CD14-positive monocyte (primary cell): ENCODE measurements at regions of chr19 and their contacts with region 1.

Region 1: DNA sequence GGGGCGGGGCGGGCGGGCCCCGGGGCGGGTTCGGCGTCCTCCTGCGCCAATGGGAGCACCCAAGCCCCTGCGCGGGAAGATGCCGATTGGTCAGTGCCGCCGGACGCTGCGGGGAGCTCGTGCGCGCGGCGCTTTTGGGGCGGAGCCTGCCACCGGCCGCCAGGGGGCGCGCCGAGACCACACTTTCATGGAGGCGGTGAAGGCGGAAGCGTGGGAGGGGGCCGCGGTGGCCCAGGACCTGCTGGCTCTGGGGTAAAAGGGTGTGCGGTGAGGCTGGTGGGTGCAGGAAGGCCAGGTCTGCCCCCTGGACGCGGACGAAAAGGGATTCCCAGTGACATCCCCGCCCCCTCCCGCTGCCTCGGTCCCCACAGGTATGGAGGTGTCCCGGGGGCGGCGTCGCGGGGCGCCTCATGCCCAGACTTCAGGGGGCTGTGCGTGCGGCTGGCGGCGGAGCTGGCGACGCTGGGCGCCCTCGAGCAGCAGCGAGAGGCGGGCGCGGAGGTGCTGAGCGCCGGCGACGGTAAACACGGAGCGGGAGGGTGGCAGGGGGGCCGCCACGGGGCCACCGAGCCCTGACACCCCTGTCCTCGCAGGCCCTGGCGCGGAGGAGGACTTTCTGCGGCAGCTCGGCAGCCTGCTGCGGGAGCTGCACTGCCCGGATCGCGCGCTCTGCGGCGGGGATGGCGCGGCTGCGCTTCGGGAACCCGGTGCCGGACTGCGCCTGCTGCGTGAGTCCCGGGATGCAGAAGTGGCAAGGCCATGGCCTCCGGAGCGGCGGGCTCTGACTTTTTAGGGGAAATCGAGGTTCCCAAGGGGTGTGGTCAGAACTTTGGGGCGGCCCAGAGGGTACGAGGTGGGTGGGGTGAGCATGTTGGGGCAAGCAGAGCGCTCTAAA is at the start of gene FAM98C:
- DNase-seq: peak; percentile 96 to 97 (median 97)
- H3K4me3 ChIP-seq: peak within 1 kb of the TSS; percentile 80 to 88 (median 88)
- H3K4me3 Mint-ChIP-seq: peak within 1 kb of the TSS; percentile 87 to 95
- H3K27ac ChIP-seq: peak within 1 kb of the TSS; percentile 15 to 83
- H3K27ac Mint-ChIP-seq: peak within 1 kb of the TSS; percentile 56 to 91 (median 82)
- H3K4me1 ChIP-seq: peaks cover 12 to 13% of the 10 kb centered on the region in 2 donors
- H3K4me1 Mint-ChIP-seq: peaks cover 16% of the 10 kb centered on the region
- H3K27me3 ChIP-seq: peaks cover 0 to 3% of the 10 kb centered on the region in 2 donors
- H3K27me3 Mint-ChIP-seq: peaks cover 8 to 17% (median 8%) of the 10 kb centered on the region in 3 donors
- CTCF ChIP-seq: peak; percentile 99
- polyA plus RNA-seq, gene FAM98C: 8.5 to 41.0 (median 12.6) TPM

Region 2: DNA sequence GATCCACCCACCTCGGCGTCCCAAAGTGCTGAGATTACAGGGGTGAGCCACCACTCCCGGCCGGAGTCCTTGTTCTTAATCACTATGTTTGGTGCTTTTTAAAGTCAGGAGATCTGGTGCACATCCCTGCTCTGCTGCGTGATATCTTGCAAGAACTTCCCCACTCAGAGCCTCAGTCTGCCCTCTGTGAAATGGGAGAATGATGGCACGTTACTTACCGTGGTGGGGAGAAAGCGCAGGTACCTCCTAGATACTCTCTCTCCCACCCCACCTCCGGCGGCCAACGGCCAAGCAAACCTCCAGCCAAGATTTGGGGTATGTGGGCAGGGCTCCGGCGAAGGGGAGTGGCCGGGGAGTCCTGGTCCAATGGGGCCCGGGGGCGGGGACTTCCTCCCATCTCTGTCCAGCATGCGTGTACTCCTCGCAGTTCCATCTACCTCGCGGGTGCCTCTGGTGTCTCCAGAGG is 30.1 kb after region 1 on chr19 and contains the start of gene RYR1:
- intact Hi-C with region 1: no loop called
- DNase-seq: peak; percentile 53 to 66 (median 63)
- H3K4me3 ChIP-seq: peak within 1 kb of the TSS in 1 of 3 experiments; percentile 38
- H3K4me3 Mint-ChIP-seq: peak within 1 kb of the TSS; percentile 52 to 82
- H3K27ac ChIP-seq: no peak within 1 kb of the TSS
- H3K27ac Mint-ChIP-seq: peak within 1 kb of the TSS in 3 of 7 donors; percentile 25 to 79 (median 38)
- H3K4me1 ChIP-seq: peaks cover 14 to 15% of the 10 kb centered on the region in 2 donors
- H3K4me1 Mint-ChIP-seq: peaks cover 20% of the 10 kb centered on the region
- H3K27me3 ChIP-seq: peaks cover 0 to 13% of the 10 kb centered on the region in 2 donors
- H3K27me3 Mint-ChIP-seq: peaks cover 10 to 13% (median 10%) of the 10 kb centered on the region in 3 donors
- CTCF ChIP-seq: no peak
- polyA plus RNA-seq, gene RYR1: 0.76 to 2.1 (median 2.1) TPM

Region 3: GRCh38 chr19:38506723-38507550 is 103.7 kb after region 1 on chr19:
- intact Hi-C with region 1: loop called in 1 of 2 experiments (anchors 5 kb)
- DNase-seq: peak; percentile 66 to 89 (median 88)
- H3K4me3 ChIP-seq: peak overlapping the region in 1 of 3 experiments; percentile 42
- H3K4me3 Mint-ChIP-seq: peak overlapping the region in 1 of 2 donors; percentile 31
- H3K27ac ChIP-seq: no peak overlapping the region
- H3K27ac Mint-ChIP-seq: peak overlapping the region in 2 of 7 donors; percentile 33 to 68
- H3K4me1 ChIP-seq: peaks cover 6 to 11% of the 10 kb centered on the region in 2 donors
- H3K4me1 Mint-ChIP-seq: peaks cover 3% of the 10 kb centered on the region
- H3K27me3 ChIP-seq: no peaks in the 10 kb centered on the region
- H3K27me3 Mint-ChIP-seq: peaks cover 7 to 20% (median 10%) of the 10 kb centered on the region in 3 donors
- CTCF ChIP-seq: no peak

Region 4: DNA sequence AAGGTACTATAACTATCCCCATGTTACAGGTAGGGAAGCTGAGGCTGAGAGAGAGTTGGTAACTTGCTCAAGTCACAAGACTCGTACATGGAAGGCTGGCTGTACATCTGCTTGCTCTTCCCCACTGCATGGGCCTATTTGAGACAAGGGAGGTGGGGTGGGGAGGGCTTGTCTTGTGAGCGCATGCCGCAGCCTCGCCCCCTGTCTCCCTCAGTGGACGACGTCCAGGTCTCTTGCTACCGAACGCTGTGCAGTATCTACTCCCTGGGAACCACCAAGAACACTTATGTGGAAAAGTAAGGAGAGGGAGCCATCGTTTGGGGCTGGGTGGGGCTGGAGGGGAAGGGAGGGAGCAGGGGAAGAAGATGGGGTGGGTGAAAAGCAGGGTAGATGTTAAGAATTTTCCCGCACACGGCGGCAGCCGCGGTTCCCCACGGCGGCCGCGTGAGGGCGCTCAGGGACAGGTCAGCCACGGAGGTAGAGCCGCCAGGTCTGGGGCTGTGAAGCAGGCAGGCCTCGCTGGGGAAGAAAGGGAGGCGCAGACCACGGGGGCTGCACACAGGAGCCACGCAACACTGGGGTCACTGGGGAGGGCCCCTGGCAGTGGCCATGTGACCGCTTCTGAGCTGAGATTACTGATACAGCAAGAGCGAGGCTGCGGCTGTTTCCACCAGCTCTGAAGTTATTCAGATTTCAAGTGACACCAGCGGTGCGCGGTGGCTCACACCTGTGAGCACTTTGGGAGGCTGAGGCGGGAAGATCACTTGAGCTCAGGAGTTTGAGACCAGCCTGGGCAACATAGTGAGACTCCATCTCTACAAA is 111.8 kb after region 1 on chr19:
- intact Hi-C with region 1: loop called in 1 of 2 experiments (anchors 5 kb)
- DNase-seq: peak; percentile 41 to 56 (median 43)
- H3K4me3 ChIP-seq: no peak overlapping the region
- H3K4me3 Mint-ChIP-seq: no peak overlapping the region
- H3K27ac ChIP-seq: no peak overlapping the region
- H3K27ac Mint-ChIP-seq: no peak overlapping the region
- H3K4me1 ChIP-seq: peaks cover 3 to 4% of the 10 kb centered on the region in 2 donors
- H3K4me1 Mint-ChIP-seq: peaks cover 5% of the 10 kb centered on the region
- H3K27me3 ChIP-seq: no peaks in the 10 kb centered on the region
- H3K27me3 Mint-ChIP-seq: peaks cover 0 to 16% (median 14%) of the 10 kb centered on the region in 3 donors
- CTCF ChIP-seq: peak; percentile 94

Region 5: DNA sequence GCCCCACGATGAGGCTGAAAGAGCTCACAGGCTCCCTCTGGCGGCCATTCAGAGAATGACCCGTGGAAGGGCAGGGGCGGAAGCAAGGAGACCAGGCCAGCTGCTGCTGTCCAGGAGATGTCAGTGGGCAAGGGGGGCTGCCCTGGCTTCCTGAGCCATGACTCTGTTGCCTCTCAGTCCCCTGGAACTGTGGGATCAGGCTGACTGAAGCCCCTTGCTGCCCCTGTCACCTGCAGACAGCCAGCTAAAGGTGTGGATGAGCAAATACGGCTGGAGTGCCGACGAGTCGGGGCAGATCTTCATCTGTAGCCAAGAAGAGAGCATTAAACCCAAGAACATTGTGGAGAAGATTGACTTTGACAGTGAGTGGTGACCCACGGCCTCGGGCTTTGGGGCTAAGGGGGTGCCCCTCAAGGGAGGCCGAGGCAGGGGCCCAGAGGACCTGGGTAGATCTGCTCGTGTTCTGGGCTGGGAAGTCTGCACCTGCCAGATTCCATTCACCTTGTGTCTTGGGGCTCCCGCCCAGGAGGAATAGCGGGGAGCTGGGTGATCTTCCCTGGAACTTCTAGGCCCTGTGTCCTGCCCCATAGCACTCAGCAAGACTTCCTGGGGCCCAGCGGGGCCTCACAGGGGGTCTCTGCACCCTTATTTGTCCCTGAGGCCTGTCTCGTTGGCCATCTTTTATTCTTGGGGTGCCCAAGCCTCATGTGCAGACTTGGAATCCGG is 231.7 kb after region 1 on chr19:
- intact Hi-C with region 1: loop called (anchors 2 to 5 kb)
- DNase-seq: peak; percentile 64 to 72 (median 71)
- H3K4me3 ChIP-seq: no peak overlapping the region
- H3K4me3 Mint-ChIP-seq: peak overlapping the region in 1 of 2 donors; percentile 48
- H3K27ac ChIP-seq: peak overlapping the region; percentile 17 to 25
- H3K27ac Mint-ChIP-seq: peak overlapping the region; percentile 45 to 92 (median 78)
- H3K4me1 ChIP-seq: peaks cover 10 to 17% of the 10 kb centered on the region in 2 donors
- H3K4me1 Mint-ChIP-seq: peaks cover 21% of the 10 kb centered on the region
- H3K27me3 ChIP-seq: no peaks in the 10 kb centered on the region
- H3K27me3 Mint-ChIP-seq: peaks cover 0 to 1% (median 0%) of the 10 kb centered on the region in 3 donors
- CTCF ChIP-seq: peak; percentile 85

Region 6: GRCh38 chr19:38929929-38930775 is 526.9 kb after region 1 on chr19 and contains the start of gene SARS2:
- intact Hi-C with region 1: loop called (anchors 10 kb)
- DNase-seq: peak; percentile 94 to 97 (median 94)
- H3K4me3 ChIP-seq: peak within 1 kb of the TSS; percentile 70 to 92 (median 86)
- H3K4me3 Mint-ChIP-seq: peak within 1 kb of the TSS; percentile 90 to 96
- H3K27ac ChIP-seq: peak within 1 kb of the TSS; percentile 69 to 96
- H3K27ac Mint-ChIP-seq: peak within 1 kb of the TSS; percentile 94 to 98 (median 97)
- H3K4me1 ChIP-seq: peaks cover 16 to 25% of the 10 kb centered on the region in 2 donors
- H3K4me1 Mint-ChIP-seq: peaks cover 15% of the 10 kb centered on the region
- H3K27me3 ChIP-seq: no peaks in the 10 kb centered on the region
- H3K27me3 Mint-ChIP-seq: peaks cover 0 to 2% (median 0%) of the 10 kb centered on the region in 3 donors
- CTCF ChIP-seq: peak; percentile 100
- polyA plus RNA-seq, gene SARS2: 8.1 to 21.9 (median 8.3) TPM